Activated CD8-positive, alpha-beta T cell treated with anti-CD3 and anti-CD28 coated beads, Interleukin-2, amount 10 ng/mL, durations not matched to agents 7 days and 5 days (primary cell): ENCODE measurements at regions of chr13 and their contacts with region 1.

Region 1: GRCh38 chr13:40974460-40975407 is 44.4 kb downstream of the ELF1 start:
- DNase-seq: peak; percentile 64
- ATAC-seq: peak; percentile 82
- H3K4me3 Mint-ChIP-seq: no peak overlapping the region
- H3K27ac Mint-ChIP-seq: peak overlapping the region; percentile 23
- H3K4me1 Mint-ChIP-seq: peaks cover 85% of the 10 kb centered on the region
- H3K27me3 Mint-ChIP-seq: no peaks in the 10 kb centered on the region

Region 2: GRCh38 chr13:40946485-40946884 is 28.2 kb before region 1 on chr13:
- CTCF ChIA-PET with region 1: interaction called, 13 read pairs
- POLR2A ChIA-PET with region 1: no interaction called
- DNase-seq: no peak
- ATAC-seq: no peak
- H3K4me3 Mint-ChIP-seq: no peak overlapping the region
- H3K27ac Mint-ChIP-seq: peak overlapping the region; percentile 51
- H3K4me1 Mint-ChIP-seq: peaks cover 11% of the 10 kb centered on the region
- H3K27me3 Mint-ChIP-seq: no peaks in the 10 kb centered on the region

Region 3: DNA sequence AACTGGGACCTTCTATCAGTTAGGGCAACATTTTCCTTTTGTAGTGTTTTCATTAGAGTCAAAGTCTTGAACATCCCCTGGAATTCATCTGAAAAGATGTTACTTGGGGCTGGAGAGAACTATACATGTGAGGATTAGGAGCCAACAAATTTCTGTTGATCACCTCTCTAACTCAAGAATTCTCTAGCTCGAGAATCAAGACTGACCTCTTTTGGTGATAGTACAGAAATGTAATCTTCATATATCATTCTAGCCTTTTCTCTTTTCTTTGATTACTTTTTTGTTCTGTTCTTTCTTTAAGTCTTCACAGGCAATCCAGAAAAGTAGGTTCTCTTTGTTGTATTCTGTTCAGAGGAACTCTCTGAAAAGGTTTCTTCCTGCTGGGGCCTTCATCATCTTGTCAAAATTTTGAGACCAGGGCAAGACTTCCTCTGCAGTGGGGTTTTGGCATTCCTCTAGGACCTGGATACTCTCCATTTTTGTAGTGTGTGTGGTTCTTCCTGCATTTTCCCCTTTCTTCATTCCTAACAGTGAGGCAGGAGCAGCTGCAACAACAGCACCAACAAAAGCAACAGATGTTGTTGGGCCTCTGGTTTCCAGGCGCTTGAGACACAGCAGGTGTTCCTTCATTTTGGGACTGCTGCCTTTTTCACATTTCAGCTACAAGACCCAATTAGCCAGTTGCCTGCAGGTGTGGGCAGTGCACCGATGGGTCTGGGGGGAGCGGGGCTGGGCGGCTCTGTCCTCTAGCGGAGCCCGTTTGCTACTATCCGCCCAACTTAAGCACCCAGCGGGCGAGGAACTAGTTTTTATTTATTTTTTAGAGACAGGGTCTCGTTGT is 18.2 kb after region 1 on chr13:
- CTCF ChIA-PET with region 1: interaction called, 32 read pairs
- POLR2A ChIA-PET with region 1: interaction called, 5 read pairs
- DNase-seq: no peak
- ATAC-seq: no peak
- H3K4me3 Mint-ChIP-seq: peak overlapping the region; percentile 8
- H3K27ac Mint-ChIP-seq: peak overlapping the region; percentile 87
- H3K4me1 Mint-ChIP-seq: peaks cover 78% of the 10 kb centered on the region
- H3K27me3 Mint-ChIP-seq: no peaks in the 10 kb centered on the region

Region 4: DNA sequence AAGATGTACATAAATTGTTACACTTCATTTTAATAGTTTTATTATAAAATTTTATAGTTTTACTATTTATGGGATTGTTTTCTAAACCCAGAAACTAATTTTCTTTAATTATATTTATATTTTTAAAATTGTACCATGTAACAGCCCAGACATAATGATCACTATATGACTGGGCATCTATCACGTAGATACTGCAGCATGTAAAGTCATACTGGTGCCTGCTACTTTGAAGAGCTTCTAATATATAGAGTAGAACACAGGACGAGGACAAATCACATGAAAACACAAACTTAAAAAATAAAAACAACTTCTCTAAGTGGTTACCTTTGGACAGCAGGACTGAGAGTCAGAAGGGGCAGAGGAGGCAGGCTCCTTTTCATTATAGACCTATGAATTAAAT is 39.1 kb after region 1 on chr13:
- CTCF ChIA-PET with region 1: interaction called, 37 read pairs
- POLR2A ChIA-PET with region 1: interaction called, 40 read pairs
- DNase-seq: no peak
- ATAC-seq: no peak
- H3K4me3 Mint-ChIP-seq: peak overlapping the region; percentile 89
- H3K27ac Mint-ChIP-seq: peak overlapping the region; percentile 78
- H3K4me1 Mint-ChIP-seq: peaks cover 53% of the 10 kb centered on the region
- H3K27me3 Mint-ChIP-seq: no peaks in the 10 kb centered on the region

Region 5: DNA sequence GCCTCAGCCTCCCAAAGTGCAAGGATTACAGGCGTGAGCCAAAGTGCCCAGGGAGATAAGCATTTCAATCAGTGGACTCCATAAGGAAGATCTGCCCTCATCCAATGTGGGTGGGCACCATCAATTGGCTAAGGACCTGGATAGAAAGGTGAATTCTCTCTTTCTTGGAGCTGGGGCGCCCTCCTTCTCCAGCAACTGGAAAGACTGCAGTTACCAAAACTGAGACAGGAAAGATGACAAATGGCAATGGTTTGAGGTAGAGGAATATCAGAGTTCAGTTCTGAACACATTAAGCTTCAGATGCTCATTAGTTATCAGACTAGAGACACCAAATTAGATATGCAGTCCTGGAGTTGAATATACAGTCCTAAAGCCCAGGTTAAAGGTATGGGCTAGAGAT is 54.9 kb after region 1 on chr13:
- CTCF ChIA-PET with region 1: interaction called, 30 read pairs
- POLR2A ChIA-PET with region 1: no interaction called
- DNase-seq: no peak
- ATAC-seq: no peak
- H3K4me3 Mint-ChIP-seq: no peak overlapping the region
- H3K27ac Mint-ChIP-seq: peak overlapping the region; percentile 8
- H3K4me1 Mint-ChIP-seq: peaks cover 25% of the 10 kb centered on the region
- H3K27me3 Mint-ChIP-seq: no peaks in the 10 kb centered on the region

Region 6: DNA sequence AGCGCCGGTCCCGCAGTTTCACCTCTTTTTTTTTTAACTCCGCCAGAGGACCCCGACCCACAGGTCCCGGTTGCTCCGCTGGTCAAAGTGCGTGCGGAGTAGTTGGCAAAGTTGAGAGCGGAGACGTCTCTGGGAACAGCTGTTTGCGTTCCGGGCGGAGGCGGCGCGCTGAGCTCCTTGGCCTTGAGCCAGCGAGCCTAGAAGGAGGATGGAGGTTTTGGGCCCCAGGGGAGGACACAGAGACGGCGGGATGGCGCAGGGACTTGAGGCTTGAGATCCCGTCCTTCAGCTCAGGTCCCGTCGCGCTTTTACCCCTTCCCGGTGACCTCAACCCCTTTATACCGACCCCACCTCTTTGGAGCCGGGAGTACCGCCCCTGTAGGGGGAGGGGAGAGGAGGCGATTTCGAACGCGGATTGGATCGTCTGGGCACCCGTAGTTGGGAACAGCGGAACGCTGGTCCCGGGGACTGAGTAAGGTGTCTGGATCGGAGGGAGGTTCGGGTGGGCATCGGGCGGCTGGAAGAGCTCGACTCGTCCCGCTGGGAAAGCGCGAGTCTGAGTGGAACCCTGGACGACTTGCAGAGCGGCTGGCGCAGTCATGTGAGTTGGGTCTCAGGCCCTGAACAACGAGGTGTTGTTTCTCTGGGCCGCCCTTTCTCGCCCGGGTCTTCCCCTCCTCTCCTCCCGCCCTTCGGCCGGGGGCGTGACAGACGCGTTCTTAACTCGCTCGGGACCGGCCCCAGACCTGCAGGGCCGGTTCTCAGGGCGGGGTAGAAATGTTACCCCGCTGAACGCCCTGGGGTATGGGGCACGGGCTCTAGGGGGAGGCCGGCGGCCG is 86.6 kb after region 1 on chr13 and contains the start of gene WBP4:
- CTCF ChIA-PET with region 1: interaction called, 60 read pairs
- POLR2A ChIA-PET with region 1: interaction called, 7 read pairs
- DNase-seq: peak; percentile 92
- ATAC-seq: peak; percentile 74
- H3K4me3 Mint-ChIP-seq: peak within 1 kb of the TSS; percentile 99
- H3K27ac Mint-ChIP-seq: peak within 1 kb of the TSS; percentile 99
- H3K4me1 Mint-ChIP-seq: peaks cover 47% of the 10 kb centered on the region
- H3K27me3 Mint-ChIP-seq: no peaks in the 10 kb centered on the region
- total RNA-seq, gene WBP4: 9.7 to 10.4 TPM